Ascending aorta (tissue), 2 donors: ENCODE measurements at regions of chr17 and their contacts with region 1.

Region 1: DNA sequence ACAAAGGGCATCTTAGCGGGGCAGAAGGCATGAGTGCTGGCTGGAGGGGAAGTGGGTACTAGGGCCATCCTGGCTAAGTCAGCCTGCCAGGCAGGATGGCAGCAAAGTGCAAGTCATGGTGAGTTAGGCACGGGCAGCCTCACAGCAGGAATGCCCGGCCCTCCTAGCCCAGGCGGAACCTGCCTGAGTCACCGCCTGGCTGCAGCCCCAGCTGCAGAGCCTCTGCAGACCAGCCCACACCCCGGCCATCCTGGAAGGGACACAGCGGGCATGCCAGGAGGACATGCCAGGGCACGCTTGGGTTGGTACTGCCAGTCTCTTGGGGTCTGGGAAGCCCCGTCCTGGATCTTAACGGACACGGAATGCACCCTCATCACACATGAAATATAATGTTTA is 4.9 kb upstream of the ALDH3A1 start:
- DNase-seq: peak; percentile 78 to 95
- H3K4me3 ChIP-seq: no peak overlapping the region
- H3K27ac ChIP-seq: peak overlapping the region; percentile 93 to 99
- H3K4me1 ChIP-seq: peaks cover 10 to 30% of the 10 kb centered on the region in 2 donors
- H3K27me3 ChIP-seq: no peaks in the 10 kb centered on the region
- CTCF ChIP-seq: no peak

Region 2: GRCh38 chr17:19728079-19728495 is 25.0 kb before region 1 on chr17:
- intact Hi-C with region 1: loop called (anchors 2 kb)
- DNase-seq: peak; percentile 47 to 90
- H3K4me3 ChIP-seq: no peak overlapping the region
- H3K27ac ChIP-seq: peak overlapping the region; percentile 76 to 88
- H3K4me1 ChIP-seq: peaks cover 12 to 17% of the 10 kb centered on the region in 2 donors
- H3K27me3 ChIP-seq: no peaks in the 10 kb centered on the region
- CTCF ChIP-seq: no peak